ENCODE measurements at regions of chr3 and their contacts with region 1.

Region 1: GRCh38 chr3:123559040-123559861 is 25.6 kb downstream of the HACD2 start:
- DNase-seq: no peak
- H3K4me3 Mint-ChIP-seq: no peak overlapping the region
- H3K27ac Mint-ChIP-seq: no peak overlapping the region
- H3K4me1 Mint-ChIP-seq: no peaks in the 10 kb centered on the region
- H3K27me3 Mint-ChIP-seq: no peaks in the 10 kb centered on the region

Region 2: DNA sequence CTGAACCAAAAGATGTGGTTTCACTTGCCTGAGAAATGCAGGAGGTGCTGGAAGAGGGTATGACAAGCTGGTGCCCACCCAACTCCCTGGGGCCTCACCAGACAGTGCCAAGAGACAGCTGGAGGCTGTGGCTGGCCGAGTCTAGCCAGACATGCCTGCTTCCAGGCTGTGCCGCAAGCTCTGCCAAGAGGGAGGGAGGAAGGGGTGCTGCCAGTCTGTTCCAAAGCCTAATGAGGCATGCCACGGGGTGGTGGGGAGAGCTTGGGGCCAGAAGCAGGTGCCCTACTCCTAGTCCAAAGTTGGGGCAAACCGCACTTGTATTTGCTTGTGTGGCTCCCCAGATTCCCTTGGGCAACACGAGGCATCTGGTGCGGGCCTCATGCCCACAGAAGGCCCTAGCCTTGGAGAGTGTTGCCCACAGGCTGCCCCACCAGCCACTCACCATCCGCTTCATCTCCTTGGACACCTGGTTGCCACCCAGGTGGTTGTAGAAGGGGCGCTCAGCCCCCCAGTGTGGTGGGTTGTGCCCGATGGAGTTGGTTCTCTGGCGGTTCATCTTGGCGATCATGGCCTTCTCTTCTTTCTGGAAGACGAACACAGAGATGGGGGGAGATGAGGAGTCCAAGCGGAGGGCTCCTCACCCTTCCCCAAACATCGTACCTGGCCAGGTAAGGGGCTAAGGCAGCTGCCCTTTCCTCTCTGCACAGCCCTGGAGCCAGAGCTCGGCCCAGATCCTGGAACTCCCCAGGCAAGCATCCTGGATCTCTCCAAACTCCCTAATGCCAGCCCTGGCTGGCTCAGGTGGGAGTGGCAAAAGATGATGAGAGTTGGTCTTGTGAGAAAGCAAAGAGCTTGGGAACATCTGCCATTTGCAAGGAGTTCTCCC is 234.1 kb before region 1 on chr3:
- CTCF ChIA-PET with region 1: interaction called, 12 read pairs
- DNase-seq: no peak
- H3K4me3 Mint-ChIP-seq: no peak overlapping the region
- H3K27ac Mint-ChIP-seq: no peak overlapping the region
- H3K4me1 Mint-ChIP-seq: no peaks in the 10 kb centered on the region
- H3K27me3 Mint-ChIP-seq: peaks cover 32% of the 10 kb centered on the region

Region 3: DNA sequence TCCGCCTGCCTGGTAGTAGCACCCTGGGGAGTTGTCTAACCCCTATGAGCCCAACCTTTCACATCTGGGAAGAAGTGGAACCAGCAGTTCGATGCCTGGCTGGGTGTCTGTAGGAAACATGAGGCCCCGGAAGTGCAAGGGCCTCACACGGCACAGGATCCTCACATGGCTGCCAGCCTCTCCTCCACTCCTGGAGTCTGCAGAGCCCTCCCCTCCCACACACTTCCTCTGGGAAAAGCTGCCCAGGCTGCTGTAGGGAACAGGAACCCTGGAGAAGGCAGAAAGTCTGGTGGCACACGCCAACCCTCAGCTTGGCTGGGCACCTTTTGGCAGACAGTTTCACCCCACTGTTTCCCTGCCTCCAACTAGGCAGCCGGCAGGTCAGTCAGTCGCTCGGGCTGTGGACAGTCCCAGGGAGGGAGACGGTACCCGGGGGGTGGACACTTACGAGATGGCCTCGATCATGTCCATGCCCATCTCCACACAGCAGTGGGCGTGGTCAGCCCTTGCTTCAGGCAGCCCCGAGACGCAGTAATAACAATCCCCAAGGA is 228.7 kb before region 1 on chr3:
- CTCF ChIA-PET with region 1: interaction called, 12 read pairs
- DNase-seq: no peak
- H3K4me3 Mint-ChIP-seq: no peak overlapping the region
- H3K27ac Mint-ChIP-seq: no peak overlapping the region
- H3K4me1 Mint-ChIP-seq: peaks cover 7% of the 10 kb centered on the region
- H3K27me3 Mint-ChIP-seq: peaks cover 19% of the 10 kb centered on the region

Region 4: GRCh38 chr3:123449102-123449996 is 109.9 kb before region 1 on chr3:
- CTCF ChIA-PET with region 1: interaction called, 19 read pairs
- DNase-seq: no peak
- H3K4me3 Mint-ChIP-seq: no peak overlapping the region
- H3K27ac Mint-ChIP-seq: no peak overlapping the region
- H3K4me1 Mint-ChIP-seq: peaks cover 4% of the 10 kb centered on the region
- H3K27me3 Mint-ChIP-seq: peaks cover 89% of the 10 kb centered on the region

Measured in activated naive CD4-positive, alpha-beta T cell treated with anti-CD3 and anti-CD28 coated beads, Interleukin-2, amount 10 ng/mL, durations not matched to agents 7 days and 5 days (primary cell).